ENCODE measurements at regions of chr10 and their contacts with region 1.

Region 1: GRCh38 chr10:95841661-95842498 is 65.9 kb upstream of the CC2D2B start:
- DNase-seq: no peak
- ATAC-seq: peak; percentile 79

Region 2: DNA sequence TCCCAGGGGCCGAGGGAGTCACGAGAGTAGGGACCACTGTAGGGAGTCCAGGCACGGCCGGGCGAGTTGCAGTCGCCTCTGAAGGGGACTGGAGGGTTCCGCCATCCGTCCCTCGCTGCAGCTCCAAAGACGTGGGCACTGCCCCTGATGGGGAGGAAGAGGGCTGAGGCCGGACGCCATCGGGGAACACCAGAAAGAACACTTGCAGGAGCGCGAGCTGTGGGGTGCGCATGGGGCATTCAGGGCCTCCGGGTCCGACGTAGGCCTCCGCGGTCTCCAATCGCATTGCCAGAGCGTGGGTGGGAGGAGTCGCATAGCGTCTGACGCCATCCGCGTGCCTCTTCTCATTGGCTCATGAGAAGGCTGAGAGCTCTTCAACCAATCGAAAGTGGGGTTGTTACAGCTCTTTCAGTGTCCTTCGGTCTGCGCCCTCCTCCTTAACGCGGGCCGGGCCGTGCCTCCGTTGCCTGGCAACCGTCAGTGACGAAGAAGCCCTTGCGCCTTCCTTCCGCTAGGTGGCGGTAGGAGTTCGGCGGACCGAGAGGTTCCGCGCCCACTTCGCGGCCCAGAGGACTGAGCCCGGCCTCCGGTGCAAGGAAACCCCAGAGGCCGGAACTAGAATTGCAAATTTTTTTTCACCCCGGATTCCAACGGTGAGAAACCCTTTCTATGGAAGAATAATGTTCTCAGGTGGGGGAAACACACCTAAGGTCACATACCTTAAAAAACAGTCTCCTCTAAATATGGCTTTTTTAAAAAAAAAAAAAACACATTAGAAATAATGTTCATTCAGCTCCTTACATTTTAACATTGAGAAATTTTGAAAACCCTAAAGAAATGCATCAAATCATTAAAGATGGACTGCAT is 148.0 kb before region 1 on chr10 and contains the start of gene TCTN3:
- intact Hi-C with region 1: loop called (anchors 10 kb)
- DNase-seq: peak; percentile 98
- ATAC-seq: peak; percentile 100
- total RNA-seq, gene TCTN3: 26.3 TPM